ENCODE measurements at regions of chr12 and their contacts with region 1.

Region 1: GRCh38 chr12:120234643-120235368 is 30.7 kb downstream of the PXN start:
- DNase-seq: peak; percentile 72 to 88 (median 76)
- ATAC-seq: peak; percentile 61
- H3K4me3 ChIP-seq: no peak overlapping the region
- H3K27ac ChIP-seq: peak overlapping the region; percentile 51; the same call in 2 of the 3 replicates
- H3K4me1 ChIP-seq: peaks cover 63 to 72% of the 10 kb centered on the region in 2 experiments
- H3K27me3 ChIP-seq: no peaks in the 10 kb centered on the region
- CTCF ChIP-seq: peak; percentile 28 to 51 (median 49); a peak in 4 of 6 replicates
- EP300 ChIP-seq: peak; percentile 50; the same call in 1 of the 2 replicates
- POLR2A ChIP-seq: no peak
- RAD21 ChIP-seq: peak in 1 of 2 experiments; percentile 61; a peak in 3 of 4 replicates

Region 2: GRCh38 chr12:120249875-120250795 is 15.3 kb after region 1 on chr12:
- CTCF ChIA-PET with region 1: no interaction called
- POLR2A ChIA-PET with region 1: interaction called, 35 read pairs
- in situ Hi-C with region 1: no loop called
- intact Hi-C with region 1: no loop called
- DNase-seq: no peak
- ATAC-seq: peak; percentile 16; the same call in 2 of the 3 replicates
- H3K4me3 ChIP-seq: no peak overlapping the region
- H3K27ac ChIP-seq: no peak overlapping the region
- H3K4me1 ChIP-seq: peaks cover 30 to 38% of the 10 kb centered on the region in 2 experiments
- H3K27me3 ChIP-seq: no peaks in the 10 kb centered on the region
- CTCF ChIP-seq: no peak
- EP300 ChIP-seq: no peak
- POLR2A ChIP-seq: no peak
- RAD21 ChIP-seq: no peak

Measured in K562 (cell line).